Endothelial cell of umbilical vein (primary cell): ENCODE measurements at regions of chr11 and their contacts with region 1.

Region 1: DNA sequence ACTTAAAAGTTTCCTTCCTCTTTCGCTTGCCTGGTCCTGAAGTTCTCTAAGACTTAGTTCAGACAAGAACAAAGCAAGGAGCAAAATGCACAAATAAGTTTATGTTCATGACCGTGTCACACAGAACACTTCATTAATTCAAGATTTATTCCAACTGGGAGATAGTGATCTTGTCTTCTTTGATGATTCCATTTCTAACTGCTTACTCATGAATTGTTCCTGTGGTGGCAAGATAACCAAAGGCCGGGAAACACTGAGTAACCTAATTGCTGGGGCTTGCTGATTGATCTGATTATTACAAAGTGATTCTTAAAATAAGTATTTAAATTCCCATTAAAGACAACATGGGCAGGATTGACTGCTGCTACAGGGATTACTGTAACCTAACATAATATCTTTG is 1462.9 kb upstream of the RAG2 start:
- DNase-seq: peak; percentile 41
- H3K4me3 ChIP-seq: no peak overlapping the region
- H3K27ac ChIP-seq: no peak overlapping the region
- H3K4me1 ChIP-seq: no peaks in the 10 kb centered on the region
- H3K27me3 ChIP-seq: no peaks in the 10 kb centered on the region
- CTCF ChIP-seq: no peak
- POLR2A ChIP-seq: no peak

Region 2: GRCh38 chr11:38038777-38039176 is 22.1 kb before region 1 on chr11:
- CTCF ChIA-PET with region 1: no interaction called
- POLR2A ChIA-PET with region 1: no interaction called
- dilution Hi-C with region 1: no loop called
- intact Hi-C with region 1: loop called (anchors 1 kb)
- DNase-seq: no peak
- H3K4me3 ChIP-seq: no peak overlapping the region
- H3K27ac ChIP-seq: no peak overlapping the region
- H3K4me1 ChIP-seq: no peaks in the 10 kb centered on the region
- H3K27me3 ChIP-seq: no peaks in the 10 kb centered on the region
- CTCF ChIP-seq: no peak
- POLR2A ChIP-seq: no peak